Activated B cell treated with CpG ODN at 0.5 μM for 24 hours (primary cell): ENCODE measurements at regions of chr9 and their contacts with region 1.

Region 1: GRCh38 chr9:111916234-111916645 is 19.6 kb downstream of the UGCG start:
- DNase-seq: no peak
- ATAC-seq: peak; percentile 41
- H3K4me3 Mint-ChIP-seq: peak overlapping the region; percentile 9
- H3K27ac Mint-ChIP-seq: peak overlapping the region; percentile 81
- H3K4me1 Mint-ChIP-seq: peaks cover 82% of the 10 kb centered on the region
- H3K27me3 Mint-ChIP-seq: no peaks in the 10 kb centered on the region
- CTCF ChIP-seq: no peak

Region 2: GRCh38 chr9:111668026-111668573 is 248.1 kb before region 1 on chr9:
- CTCF ChIA-PET with region 1: no interaction called
- POLR2A ChIA-PET with region 1: interaction called, 14 read pairs
- intact Hi-C with region 1: no loop called
- DNase-seq: no peak
- ATAC-seq: no peak
- H3K4me3 Mint-ChIP-seq: no peak overlapping the region
- H3K27ac Mint-ChIP-seq: no peak overlapping the region
- H3K4me1 Mint-ChIP-seq: peaks cover 5% of the 10 kb centered on the region
- H3K27me3 Mint-ChIP-seq: no peaks in the 10 kb centered on the region
- CTCF ChIP-seq: no peak

Region 3: DNA sequence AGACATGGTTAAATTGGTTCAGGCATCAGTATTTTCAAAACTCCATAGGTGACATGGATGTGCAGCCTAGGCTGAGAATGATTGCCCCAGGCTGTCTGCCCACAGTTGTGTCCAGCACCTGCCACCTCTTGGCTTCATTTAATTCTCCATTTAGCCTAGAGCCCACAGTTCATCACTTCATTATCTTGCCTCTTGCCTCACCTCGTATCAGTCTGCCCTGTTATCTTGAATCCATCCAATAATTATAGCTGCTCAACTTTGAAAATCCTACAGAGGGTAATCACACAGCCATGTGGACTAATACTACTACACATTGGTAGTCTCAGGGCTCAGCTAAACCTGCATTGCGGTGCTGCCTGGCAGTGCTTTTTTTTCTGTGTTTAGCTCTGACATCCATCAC is 12.2 kb before region 1 on chr9:
- CTCF ChIA-PET with region 1: no interaction called
- POLR2A ChIA-PET with region 1: interaction called, 10 read pairs
- intact Hi-C with region 1: no loop called
- DNase-seq: no peak
- ATAC-seq: no peak
- H3K4me3 Mint-ChIP-seq: peak overlapping the region; percentile 21
- H3K27ac Mint-ChIP-seq: peak overlapping the region; percentile 2
- H3K4me1 Mint-ChIP-seq: peaks cover 55% of the 10 kb centered on the region
- H3K27me3 Mint-ChIP-seq: no peaks in the 10 kb centered on the region
- CTCF ChIP-seq: no peak